ENCODE measurements at regions of chr11 and their contacts with region 1.

Region 1: DNA sequence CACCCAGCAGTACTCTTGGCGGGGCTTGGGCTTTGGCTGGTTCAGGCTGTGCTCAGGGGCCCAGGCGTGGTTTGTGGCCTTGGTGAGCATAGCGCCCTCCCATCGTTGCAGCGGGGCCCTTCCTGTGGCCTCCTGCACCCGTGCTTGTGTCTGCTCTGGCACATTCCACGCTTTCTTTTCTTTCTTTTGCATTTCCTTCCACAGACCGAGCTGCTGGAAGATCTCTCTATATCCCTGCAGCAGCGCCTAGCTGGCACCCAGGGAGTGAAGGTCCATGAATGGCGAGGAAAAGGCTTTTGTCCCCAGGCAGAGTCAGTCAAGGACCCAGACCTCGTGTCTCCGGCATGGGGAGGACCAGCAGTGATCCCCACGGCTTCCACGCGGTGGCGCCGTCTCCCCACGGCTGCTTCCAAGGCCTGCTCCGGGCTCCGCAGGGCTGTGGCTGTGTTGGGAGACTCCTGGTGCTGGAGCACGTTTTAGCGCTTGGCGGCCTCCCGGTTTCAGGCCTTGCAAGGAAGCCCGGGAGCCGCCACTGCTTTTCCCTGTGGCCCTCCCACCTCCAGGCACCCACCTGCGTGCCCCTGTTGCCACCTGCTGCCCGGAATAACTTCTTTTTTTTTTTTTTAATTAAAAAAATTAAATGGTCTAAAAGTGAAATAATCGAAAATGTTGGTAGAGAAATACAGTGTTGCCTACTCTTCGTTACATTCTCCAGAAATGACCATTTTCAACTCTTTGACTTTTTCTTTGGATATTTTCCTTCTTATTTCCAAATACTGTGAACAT is 28.5 kb downstream of the GLB1L2 start:
- DNase-seq: peak; percentile 22
- H3K4me3 ChIP-seq: no peak overlapping the region
- H3K27ac ChIP-seq: no peak overlapping the region
- H3K4me1 ChIP-seq: no peaks in the 10 kb centered on the region
- H3K27me3 ChIP-seq: no peaks in the 10 kb centered on the region
- CTCF ChIP-seq: peak; percentile 72 to 84

Region 2: GRCh38 chr11:134181707-134182106 is 178.5 kb before region 1 on chr11:
- CTCF ChIA-PET with region 1: no interaction called
- dilution Hi-C with region 1: no loop called
- in situ Hi-C with region 1: no loop called
- intact Hi-C with region 1: no loop called
- DNase-seq: peak; percentile 29
- H3K4me3 ChIP-seq: no peak overlapping the region
- H3K27ac ChIP-seq: no peak overlapping the region
- H3K4me1 ChIP-seq: no peaks in the 10 kb centered on the region
- H3K27me3 ChIP-seq: no peaks in the 10 kb centered on the region
- CTCF ChIP-seq: no peak

Region 3: GRCh38 chr11:134261626-134262488 is 98.4 kb before region 1 on chr11:
- CTCF ChIA-PET with region 1: interaction called, 8 read pairs
- dilution Hi-C with region 1: no loop called
- in situ Hi-C with region 1: no loop called
- intact Hi-C with region 1: loop called (anchors 1 kb)
- DNase-seq: no peak
- H3K4me3 ChIP-seq: no peak overlapping the region
- H3K27ac ChIP-seq: no peak overlapping the region
- H3K4me1 ChIP-seq: peaks cover 7% of the 10 kb centered on the region
- H3K27me3 ChIP-seq: no peaks in the 10 kb centered on the region
- CTCF ChIP-seq: peak; percentile 65 to 72

Region 4: DNA sequence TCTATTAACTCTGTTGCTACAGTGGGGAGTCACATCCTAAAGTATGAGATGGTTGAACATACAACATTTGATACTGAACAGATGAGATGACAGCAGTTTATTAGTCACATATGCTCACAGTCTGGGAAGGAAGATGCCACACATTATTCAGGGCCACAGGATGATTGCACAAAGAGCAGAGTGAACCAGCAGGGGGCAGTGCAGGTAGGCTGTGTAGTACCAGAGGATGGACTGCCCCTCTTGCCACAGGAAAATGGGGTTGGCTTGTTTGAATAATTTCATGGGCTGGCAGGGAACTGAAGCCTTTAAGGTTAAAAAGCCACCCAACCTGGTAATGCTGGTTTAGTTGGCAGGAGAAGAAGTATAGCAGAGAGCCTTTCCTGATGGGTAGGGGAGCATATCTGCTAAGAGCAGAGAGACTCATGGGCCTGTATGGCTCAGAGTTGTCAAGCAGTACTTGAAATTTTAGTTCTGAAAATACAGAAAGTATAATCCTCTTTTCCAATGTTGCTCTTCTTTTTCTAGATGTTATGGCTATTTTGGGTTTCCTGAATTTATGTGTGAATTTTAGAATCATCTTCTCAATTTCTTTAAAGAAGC is 232.2 kb after region 1 on chr11:
- CTCF ChIA-PET with region 1: no interaction called
- dilution Hi-C with region 1: no loop called
- in situ Hi-C with region 1: no loop called
- intact Hi-C with region 1: loop called (anchors 5 kb)
- DNase-seq: no peak
- H3K4me3 ChIP-seq: no peak overlapping the region
- H3K27ac ChIP-seq: no peak overlapping the region
- H3K4me1 ChIP-seq: no peaks in the 10 kb centered on the region
- H3K27me3 ChIP-seq: no peaks in the 10 kb centered on the region
- CTCF ChIP-seq: peak in 1 of 2 donors; percentile 1

Region 5: DNA sequence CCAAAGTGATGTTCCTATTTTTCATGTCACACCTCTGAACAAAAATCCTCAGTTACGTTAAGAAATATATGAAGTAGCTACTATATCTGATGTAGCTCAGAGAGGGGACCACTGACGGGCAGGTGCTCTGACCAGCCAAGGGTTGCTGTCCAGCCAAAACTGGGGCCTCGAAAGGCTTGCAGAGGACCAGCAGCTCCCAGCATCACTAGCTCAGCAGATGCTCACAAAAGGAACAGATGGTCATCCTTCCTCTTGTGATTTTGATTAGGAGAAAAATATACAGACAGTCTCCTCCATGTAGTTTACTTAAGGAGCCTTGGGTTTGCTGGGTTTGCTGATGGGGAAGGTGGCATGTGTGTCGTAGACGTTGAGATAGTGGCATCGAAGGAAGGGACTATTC is 426.4 kb after region 1 on chr11:
- CTCF ChIA-PET with region 1: no interaction called
- dilution Hi-C with region 1: no loop called
- in situ Hi-C with region 1: no loop called
- intact Hi-C with region 1: loop called (anchors 2 kb)
- DNase-seq: no peak
- H3K4me3 ChIP-seq: no peak overlapping the region
- H3K27ac ChIP-seq: no peak overlapping the region
- H3K4me1 ChIP-seq: no peaks in the 10 kb centered on the region
- H3K27me3 ChIP-seq: no peaks in the 10 kb centered on the region
- CTCF ChIP-seq: no peak

Region 6: DNA sequence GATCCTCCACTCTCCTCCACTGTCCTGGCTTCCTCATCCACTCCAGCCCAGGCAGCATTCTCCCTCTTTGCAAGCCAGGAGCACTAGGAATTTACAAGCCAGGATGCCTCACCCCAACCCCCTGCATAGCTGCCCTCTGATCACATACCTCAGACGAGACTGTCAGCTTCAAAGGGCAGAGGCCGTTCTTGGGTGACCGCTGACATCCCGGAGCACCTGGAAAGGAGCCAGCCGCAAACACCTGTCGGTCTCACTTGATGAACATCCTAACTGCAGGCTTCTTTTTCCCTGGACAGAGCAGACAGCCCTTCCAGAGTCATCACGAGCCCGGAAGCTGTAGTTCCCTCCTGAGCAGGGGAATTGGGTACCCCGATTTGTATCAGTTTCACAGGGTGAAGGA is 503.1 kb after region 1 on chr11:
- CTCF ChIA-PET with region 1: no interaction called
- dilution Hi-C with region 1: no loop called
- in situ Hi-C with region 1: no loop called
- intact Hi-C with region 1: loop called (anchors 5 kb)
- DNase-seq: no peak
- H3K4me3 ChIP-seq: no peak overlapping the region
- H3K27ac ChIP-seq: no peak overlapping the region
- H3K4me1 ChIP-seq: no peaks in the 10 kb centered on the region
- H3K27me3 ChIP-seq: no peaks in the 10 kb centered on the region
- CTCF ChIP-seq: no peak

Region 7: GRCh38 chr11:134949121-134950090 is 589.2 kb after region 1 on chr11:
- CTCF ChIA-PET with region 1: no interaction called
- dilution Hi-C with region 1: no loop called
- in situ Hi-C with region 1: no loop called
- intact Hi-C with region 1: loop called (anchors 5 kb)
- DNase-seq: no peak
- H3K4me3 ChIP-seq: no peak overlapping the region
- H3K27ac ChIP-seq: no peak overlapping the region
- H3K4me1 ChIP-seq: no peaks in the 10 kb centered on the region
- H3K27me3 ChIP-seq: no peaks in the 10 kb centered on the region
- CTCF ChIP-seq: no peak

Measured in mammary epithelial cell (primary cell).